ENCODE measurements at regions of chr9 and their contacts with region 1.

Region 1: DNA sequence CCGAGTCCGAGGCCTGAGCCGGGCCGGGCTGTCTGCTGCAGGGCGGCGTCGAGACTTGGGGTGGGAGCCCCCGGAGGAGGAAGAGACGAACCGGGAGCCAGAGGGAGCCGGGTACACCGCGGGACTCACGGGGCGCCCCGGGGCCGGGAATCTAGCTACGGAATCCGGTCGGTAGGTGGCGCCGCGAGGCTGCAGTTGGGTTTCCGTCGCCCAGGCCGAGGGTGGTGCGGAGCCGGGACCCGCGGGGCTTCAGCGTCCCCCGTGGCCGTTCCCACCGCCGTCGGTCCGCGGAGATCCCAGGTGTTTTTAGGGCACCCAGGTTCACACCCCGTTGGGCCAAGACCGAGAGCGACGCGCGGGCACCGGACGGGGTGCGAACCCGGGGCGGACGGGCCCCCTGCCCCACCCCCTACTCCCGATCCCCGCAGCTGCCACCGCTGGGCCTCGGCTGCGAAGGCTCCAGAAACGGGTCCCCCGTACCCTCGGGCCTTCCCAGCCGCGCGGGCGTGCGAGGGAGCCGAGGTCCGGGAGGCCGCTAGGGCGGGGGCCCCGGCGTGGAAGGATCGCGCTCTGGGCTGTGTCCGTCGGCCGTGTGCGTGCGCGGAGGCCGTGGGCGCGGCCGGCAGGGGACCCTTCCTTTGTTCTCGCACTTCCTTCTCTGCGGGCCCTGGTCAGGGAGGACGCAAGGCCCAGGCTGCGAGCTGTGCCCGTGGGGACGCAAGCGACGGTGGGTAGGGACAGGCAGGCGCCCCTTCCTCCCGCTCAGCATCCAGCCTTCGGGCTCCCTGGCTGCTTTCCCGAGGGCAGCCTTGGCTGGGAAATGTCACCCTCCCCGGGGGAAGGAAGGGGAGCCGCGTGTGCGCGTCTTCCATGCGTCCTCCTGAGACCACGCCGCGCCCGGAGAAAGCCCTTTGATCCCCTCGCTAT is 146.6 kb downstream of the GAPVD1 start:
- DNase-seq: peak; percentile 94

Region 2: DNA sequence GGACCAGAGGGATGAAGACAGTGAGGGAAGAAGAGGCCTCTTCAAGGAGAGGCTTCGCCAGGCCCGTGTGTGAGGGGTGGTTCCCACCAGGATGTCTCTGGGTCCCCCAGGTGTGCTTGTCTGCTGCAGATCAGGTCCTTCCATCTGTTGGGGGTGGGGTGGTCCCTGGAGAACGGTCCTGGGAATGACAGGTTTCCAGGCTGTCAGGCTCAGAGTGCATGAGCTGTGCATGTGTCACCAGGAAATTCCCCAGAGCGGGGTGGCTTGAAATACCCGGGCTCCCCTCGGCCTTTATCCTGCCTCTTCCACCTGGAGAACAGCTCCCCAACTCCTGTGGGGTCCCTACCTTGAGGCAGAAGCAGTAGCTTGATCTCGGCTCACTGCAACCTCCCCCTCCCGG is 27.8 kb before region 1 on chr9:
- intact Hi-C with region 1: no loop called
- DNase-seq: peak; percentile 50

Region 3: DNA sequence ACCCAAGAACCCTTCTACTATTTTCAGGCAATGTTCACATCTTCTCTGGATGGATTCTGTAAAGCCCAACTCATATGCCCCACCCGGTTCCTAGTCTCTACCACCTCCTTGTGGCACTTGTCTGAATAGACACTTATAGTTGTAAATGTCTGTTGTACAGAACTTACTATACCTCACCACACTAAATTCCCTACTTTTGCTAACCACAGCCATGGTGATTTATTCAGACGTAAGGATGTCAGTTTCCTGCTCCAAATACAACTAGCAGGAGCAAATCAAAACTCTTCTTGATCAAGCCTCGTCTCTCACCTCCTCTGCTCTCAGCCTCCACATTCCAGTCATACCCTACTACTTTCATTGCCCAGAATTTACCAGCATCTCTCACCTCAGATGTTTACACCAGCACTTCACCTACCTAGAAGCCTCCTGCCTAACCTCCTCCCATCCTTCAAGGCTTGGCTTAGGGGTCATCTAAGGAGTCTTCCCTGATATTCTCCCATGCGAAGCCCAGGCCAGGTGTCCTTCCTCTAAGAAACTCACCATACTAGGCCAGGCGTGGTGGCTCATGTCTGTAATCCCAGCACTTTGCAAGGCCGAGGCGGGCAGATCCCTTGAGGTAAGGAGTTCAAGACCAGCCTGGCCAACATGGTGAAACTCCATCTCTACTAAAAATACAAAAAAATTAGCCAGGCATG is 223.3 kb after region 1 on chr9:
- intact Hi-C with region 1: loop called (anchors 2 to 5 kb)
- DNase-seq: no peak

Region 4: GRCh38 chr9:126228781-126229444 is 820.7 kb after region 1 on chr9:
- intact Hi-C with region 1: loop called (anchors 5 kb)
- DNase-seq: peak; percentile 91

Measured in posterior vena cava (tissue), 2 donors.